IMR-90 (cell line): ENCODE measurements at regions of chr12 and their contacts with region 1.

Region 1: GRCh38 chr12:114403011-114403689 is 2.8 kb downstream of the TBX5 start:
- DNase-seq: peak; percentile 69
- ATAC-seq: peak; percentile 7
- H3K4me3 ChIP-seq: peak overlapping the region; percentile 97
- H3K27ac ChIP-seq: peak overlapping the region; percentile 100
- H3K4me1 ChIP-seq: peaks cover 21% of the 10 kb centered on the region
- H3K27me3 ChIP-seq: no peaks in the 10 kb centered on the region
- CTCF ChIP-seq: peak; percentile 38
- POLR2A ChIP-seq: no peak
- RAD21 ChIP-seq: peak; percentile 21

Region 2: DNA sequence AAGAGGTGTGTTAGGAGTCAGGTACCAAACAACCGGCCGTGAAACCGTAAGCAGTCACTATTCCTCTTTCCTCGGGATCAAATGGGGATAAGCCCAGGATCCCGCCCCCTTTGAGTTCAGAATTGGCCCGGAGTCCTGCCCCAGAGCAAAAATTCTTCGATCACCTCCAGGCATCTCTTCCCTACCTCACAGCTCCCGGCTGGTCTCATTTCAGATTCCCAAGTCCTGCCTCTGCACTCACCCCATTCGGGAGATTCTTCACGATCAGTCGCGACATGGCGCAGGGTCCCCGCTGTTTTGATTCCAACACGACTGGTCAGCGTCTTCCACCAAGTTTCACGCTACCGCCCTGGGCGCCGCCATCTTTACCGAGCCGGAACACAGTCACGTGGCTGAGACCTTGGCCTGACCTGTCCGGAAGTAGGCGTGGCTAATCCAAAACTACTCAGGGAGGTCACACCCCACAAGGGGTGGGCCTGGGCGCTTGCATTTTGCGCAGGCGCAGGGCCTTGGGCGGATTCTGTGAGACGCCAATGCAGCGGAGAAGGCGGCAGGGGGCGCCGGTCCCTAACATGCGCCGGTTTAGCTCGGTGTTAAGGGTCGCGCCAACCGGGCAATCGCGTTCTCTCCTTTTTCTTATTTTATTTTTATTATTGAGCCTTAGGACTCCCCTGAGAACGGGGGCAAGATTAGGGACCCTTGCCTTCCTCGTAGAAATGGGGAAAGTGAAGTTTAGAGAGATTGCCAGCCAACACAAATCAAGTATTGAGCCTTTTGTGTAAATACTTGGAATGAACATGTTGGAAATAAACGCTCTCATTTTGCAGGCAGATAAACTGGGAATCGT is 437.0 kb before region 1 on chr12 and contains the start of gene RBM19:
- CTCF ChIA-PET with region 1: no interaction called
- POLR2A ChIA-PET with region 1: no interaction called
- dilution Hi-C with region 1: no loop called
- in situ Hi-C with region 1: no loop called
- intact Hi-C with region 1: loop called (anchors 5 kb)
- DNase-seq: peak; percentile 97
- ATAC-seq: peak; percentile 100
- H3K4me3 ChIP-seq: peak within 1 kb of the TSS; percentile 60
- H3K27ac ChIP-seq: peak within 1 kb of the TSS; percentile 63
- H3K4me1 ChIP-seq: no peaks in the 10 kb centered on the region
- H3K27me3 ChIP-seq: peaks cover 5% of the 10 kb centered on the region; the same call in 1 of the 2 replicates
- CTCF ChIP-seq: peak; percentile 95
- POLR2A ChIP-seq: peak; percentile 80; the same call in 1 of the 2 replicates
- RAD21 ChIP-seq: peak; percentile 62
- total RNA-seq, gene RBM19: 18.3 and 19.2 TPM in 2 replicates

Region 3: DNA sequence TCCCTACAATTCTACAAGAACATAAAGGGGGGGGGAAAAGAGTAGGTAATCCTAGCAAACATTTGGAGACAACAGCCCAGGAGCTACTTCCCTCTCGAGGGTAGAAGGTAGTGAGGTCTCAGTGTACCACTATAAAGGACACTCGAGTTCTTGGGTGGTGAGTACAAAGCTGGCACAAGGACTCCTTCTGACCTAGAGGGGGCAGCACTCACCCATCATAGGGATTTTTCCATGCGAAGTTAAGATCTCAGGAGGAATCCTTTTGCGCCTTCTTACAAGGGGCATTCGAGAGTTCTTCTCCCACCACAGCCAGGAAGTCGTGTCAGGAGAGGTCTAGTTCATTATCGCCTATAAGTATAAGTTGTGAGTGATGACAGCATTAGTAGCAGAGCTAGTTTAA is 236.8 kb before region 1 on chr12:
- CTCF ChIA-PET with region 1: no interaction called
- POLR2A ChIA-PET with region 1: no interaction called
- dilution Hi-C with region 1: no loop called
- in situ Hi-C with region 1: no loop called
- intact Hi-C with region 1: loop called (anchors 5 kb)
- DNase-seq: peak; percentile 60
- ATAC-seq: peak; percentile 75
- H3K4me3 ChIP-seq: no peak overlapping the region
- H3K27ac ChIP-seq: no peak overlapping the region
- H3K4me1 ChIP-seq: no peaks in the 10 kb centered on the region
- H3K27me3 ChIP-seq: no peaks in the 10 kb centered on the region; the same call in 1 of the 2 replicates
- CTCF ChIP-seq: peak; percentile 62
- POLR2A ChIP-seq: no peak
- RAD21 ChIP-seq: peak; percentile 74

Region 4: GRCh38 chr12:114476159-114476558 is 73.0 kb after region 1 on chr12:
- CTCF ChIA-PET with region 1: interaction called, 3 read pairs
- POLR2A ChIA-PET with region 1: interaction called, 6 read pairs
- dilution Hi-C with region 1: no loop called
- in situ Hi-C with region 1: loop called (anchors 5 kb)
- intact Hi-C with region 1: loop called (anchors 1 kb)
- DNase-seq: peak; percentile 66
- ATAC-seq: peak; percentile 64
- H3K4me3 ChIP-seq: no peak overlapping the region
- H3K27ac ChIP-seq: no peak overlapping the region
- H3K4me1 ChIP-seq: no peaks in the 10 kb centered on the region; the same call in 1 of the 2 replicates
- H3K27me3 ChIP-seq: peaks cover 19% of the 10 kb centered on the region
- CTCF ChIP-seq: peak; percentile 71
- POLR2A ChIP-seq: no peak
- RAD21 ChIP-seq: peak; percentile 68

Region 5: DNA sequence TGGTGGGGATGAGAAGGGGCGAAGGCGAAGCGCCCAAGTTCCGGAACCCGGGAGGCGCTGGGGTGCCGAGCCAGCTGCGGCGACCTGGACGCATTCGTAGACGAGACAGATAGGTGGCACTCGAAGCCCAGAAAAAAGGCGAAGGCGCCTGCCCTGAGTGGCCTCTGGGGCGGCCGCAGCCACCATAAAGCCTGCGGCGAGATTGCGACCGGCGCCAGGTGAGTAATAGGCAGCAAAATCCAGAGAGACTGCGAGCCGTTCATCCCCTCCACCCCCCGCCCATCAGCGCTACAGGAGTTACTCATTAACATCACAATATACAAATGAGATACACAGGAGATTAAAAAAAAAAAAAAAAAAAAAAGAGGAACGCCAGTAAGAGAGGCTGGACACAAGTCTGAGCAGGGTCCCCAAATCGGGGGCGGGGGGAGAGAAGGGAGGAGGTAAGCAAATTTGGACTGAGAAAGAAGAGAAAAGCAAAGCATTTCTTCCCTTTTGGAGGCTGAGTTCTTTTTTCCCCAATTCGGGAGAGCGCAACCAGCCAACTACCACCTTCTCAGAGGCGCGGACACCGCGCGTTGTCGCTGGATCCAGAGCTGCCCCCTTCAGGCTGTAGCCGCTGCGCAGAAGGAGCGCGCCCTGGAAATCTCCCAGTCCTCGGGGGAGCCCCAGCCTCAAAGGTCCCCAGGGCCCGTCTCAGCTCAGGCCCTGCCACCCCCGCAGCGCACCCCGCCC is 265.2 kb after region 1 on chr12:
- CTCF ChIA-PET with region 1: no interaction called
- POLR2A ChIA-PET with region 1: no interaction called
- dilution Hi-C with region 1: no loop called
- in situ Hi-C with region 1: no loop called
- intact Hi-C with region 1: loop called (anchors 5 kb)
- DNase-seq: peak; percentile 84
- ATAC-seq: peak; percentile 59
- H3K4me3 ChIP-seq: peak overlapping the region; percentile 40
- H3K27ac ChIP-seq: peak overlapping the region; percentile 89
- H3K4me1 ChIP-seq: peaks cover 4% of the 10 kb centered on the region
- H3K27me3 ChIP-seq: no peaks in the 10 kb centered on the region
- CTCF ChIP-seq: peak; percentile 75
- POLR2A ChIP-seq: peak; percentile 23; the same call in 1 of the 2 replicates
- RAD21 ChIP-seq: peak; percentile 84

Region 6: GRCh38 chr12:115341442-115341841 is 938.3 kb after region 1 on chr12:
- CTCF ChIA-PET with region 1: no interaction called
- POLR2A ChIA-PET with region 1: no interaction called
- dilution Hi-C with region 1: no loop called
- in situ Hi-C with region 1: loop called (anchors 25 kb)
- intact Hi-C with region 1: no loop called
- DNase-seq: peak; percentile 100
- ATAC-seq: peak; percentile 81
- H3K4me3 ChIP-seq: no peak overlapping the region
- H3K27ac ChIP-seq: peak overlapping the region; percentile 35; the same call in 1 of the 2 replicates
- H3K4me1 ChIP-seq: peaks cover 10% of the 10 kb centered on the region
- H3K27me3 ChIP-seq: no peaks in the 10 kb centered on the region
- CTCF ChIP-seq: no peak
- POLR2A ChIP-seq: no peak
- RAD21 ChIP-seq: peak; percentile 47